ENCODE measurements at regions of chr14 and their contacts with region 1.

Region 1: GRCh38 chr14:21103710-21104447 is 3.0 kb downstream of the TMEM253 start:
- DNase-seq: peak; percentile 97 to 99 (median 97)
- ATAC-seq: peak; percentile 94 to 97 (median 96)
- H3K4me3 ChIP-seq: peak overlapping the region; percentile 61 to 88 (median 76)
- H3K27ac ChIP-seq: peak overlapping the region; percentile 95 to 100 (median 97)
- H3K4me1 ChIP-seq: peaks cover 0 to 53% (median 37%) of the 10 kb centered on the region in 12 donors
- H3K27me3 ChIP-seq: no peaks in the 10 kb centered on the region
- CTCF ChIP-seq: peak; percentile 57 to 93 (median 80)
- POLR2A ChIP-seq: peak in 1 of 2 donors; percentile 91

Region 2: GRCh38 chr14:20461274-20462001 is 642.4 kb before region 1 on chr14 and contains the start of gene PIP4P1:
- intact Hi-C with region 1: loop called in 1 of 10 experiments (anchors 10 kb)
- DNase-seq: peak; percentile 98 to 100 (median 99)
- ATAC-seq: peak; percentile 97 to 99 (median 98)
- H3K4me3 ChIP-seq: peak within 1 kb of the TSS; percentile 66 to 99 (median 92)
- H3K27ac ChIP-seq: peak within 1 kb of the TSS; percentile 57 to 97 (median 92)
- H3K4me1 ChIP-seq: peaks cover 0 to 52% (median 17%) of the 10 kb centered on the region in 12 donors
- H3K27me3 ChIP-seq: no peaks in the 10 kb centered on the region
- CTCF ChIP-seq: no peak
- POLR2A ChIP-seq: peak in 1 of 2 donors; percentile 88
- total RNA-seq, gene PIP4P1: 12.3 to 25.3 (median 18.0) TPM

Region 3: GRCh38 chr14:20855652-20856291 is 248.1 kb before region 1 on chr14:
- intact Hi-C with region 1: loop called in 4 of 10 experiments (anchors 5 to 10 kb)
- DNase-seq: peak in 4 of 5 donors; percentile 54 to 65 (median 58)
- ATAC-seq: peak; percentile 84 to 96 (median 95)
- H3K4me3 ChIP-seq: no peak overlapping the region
- H3K27ac ChIP-seq: no peak overlapping the region
- H3K4me1 ChIP-seq: peaks cover 0 to 6% (median 0%) of the 10 kb centered on the region in 12 donors
- H3K27me3 ChIP-seq: peaks cover 0 to 9% (median 0%) of the 10 kb centered on the region in 9 donors
- CTCF ChIP-seq: peak; percentile 64 to 85 (median 74)
- POLR2A ChIP-seq: no peak

Region 4: GRCh38 chr14:21071225-21072030 is 32.5 kb before region 1 on chr14:
- intact Hi-C with region 1: loop called (anchors 1 to 5 kb)
- DNase-seq: peak; percentile 90 to 95 (median 92)
- ATAC-seq: peak; percentile 69 to 81 (median 74)
- H3K4me3 ChIP-seq: peak overlapping the region; percentile 68 to 99 (median 82)
- H3K27ac ChIP-seq: peak overlapping the region; percentile 86 to 99 (median 92)
- H3K4me1 ChIP-seq: peaks cover 0 to 40% (median 28%) of the 10 kb centered on the region in 12 donors
- H3K27me3 ChIP-seq: peaks cover 0 to 6% (median 0%) of the 10 kb centered on the region in 9 donors
- CTCF ChIP-seq: peak in 1 of 12 donors; percentile 20
- POLR2A ChIP-seq: peak in 1 of 2 donors; percentile 39

Region 5: DNA sequence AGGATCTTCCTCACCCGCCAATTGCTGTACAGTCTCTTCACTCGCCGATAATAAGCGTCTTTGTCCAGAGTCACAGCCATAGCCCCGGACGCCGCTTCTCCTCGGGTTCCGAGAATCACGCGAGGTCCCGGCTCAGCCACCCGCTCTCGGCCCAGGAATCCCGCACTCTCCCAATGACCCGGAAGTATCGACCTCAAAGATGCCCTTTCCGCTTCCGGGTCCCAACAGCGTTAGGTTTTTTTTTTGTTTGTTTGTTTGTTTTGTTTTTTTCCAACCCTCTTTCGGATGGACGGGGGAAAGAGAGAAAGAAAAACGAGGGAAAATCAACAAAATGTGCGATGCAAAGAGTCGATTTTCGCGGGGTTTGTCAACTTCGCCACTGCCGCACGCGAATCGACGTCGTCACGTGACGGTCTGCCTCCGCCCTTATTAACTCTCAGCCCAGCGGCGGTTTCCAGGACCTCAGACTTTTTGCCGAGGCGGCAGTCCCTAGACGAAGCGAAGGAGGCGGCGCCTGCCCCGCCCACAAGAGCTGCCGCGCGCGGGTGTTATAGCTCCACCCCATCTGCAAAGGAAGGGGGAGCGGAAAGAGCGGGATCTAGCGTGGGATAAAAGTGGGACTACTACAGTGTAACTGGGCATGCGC is 280.1 kb after region 1 on chr14 and contains the start of gene SUPT16H:
- intact Hi-C with region 1: loop called in 1 of 10 experiments (anchors 10 kb)
- DNase-seq: peak; percentile 95 to 98 (median 97)
- ATAC-seq: peak; percentile 98 to 99 (median 98)
- H3K4me3 ChIP-seq: peak within 1 kb of the TSS; percentile 63 to 97 (median 71)
- H3K27ac ChIP-seq: peak within 1 kb of the TSS; percentile 29 to 97 (median 90)
- H3K4me1 ChIP-seq: peaks cover 0 to 48% (median 29%) of the 10 kb centered on the region in 12 donors
- H3K27me3 ChIP-seq: no peaks in the 10 kb centered on the region
- CTCF ChIP-seq: peak in 1 of 12 donors; percentile 12
- POLR2A ChIP-seq: no peak
- total RNA-seq, gene SUPT16H: 25.1 to 38.1 (median 29.6) TPM